Activated T-helper 1 cell treated with anti-CD3 and anti-CD28 coated beads, Interleukin-12 subunit alpha, Interleukin-12 subunit beta, Interleukin-2, Interleukin-4 antibody, amounts not matched to agents 30 ng/mL and 10 ng/mL and 1 ng/mL, durations not matched to agents 14 hours and 24 hours and 36 hours (primary cell): ENCODE measurements at regions of chr1 and their contacts with region 1.

Region 1: GRCh38 chr1:117642963-117643362 is 37.1 kb downstream of the TENT5C start:
- DNase-seq: no peak
- H3K4me3 Mint-ChIP-seq: no peak overlapping the region
- H3K27ac Mint-ChIP-seq: no peak overlapping the region
- H3K4me1 Mint-ChIP-seq: no peaks in the 10 kb centered on the region
- H3K27me3 Mint-ChIP-seq: peaks cover 30% of the 10 kb centered on the region

Region 2: GRCh38 chr1:117612517-117613248 is 30.3 kb before region 1 on chr1:
- intact Hi-C with region 1: loop called (anchors 2 kb)
- DNase-seq: no peak
- H3K4me3 Mint-ChIP-seq: no peak overlapping the region
- H3K27ac Mint-ChIP-seq: peak overlapping the region; percentile 25
- H3K4me1 Mint-ChIP-seq: peaks cover 86% of the 10 kb centered on the region
- H3K27me3 Mint-ChIP-seq: peaks cover 3% of the 10 kb centered on the region

Region 3: DNA sequence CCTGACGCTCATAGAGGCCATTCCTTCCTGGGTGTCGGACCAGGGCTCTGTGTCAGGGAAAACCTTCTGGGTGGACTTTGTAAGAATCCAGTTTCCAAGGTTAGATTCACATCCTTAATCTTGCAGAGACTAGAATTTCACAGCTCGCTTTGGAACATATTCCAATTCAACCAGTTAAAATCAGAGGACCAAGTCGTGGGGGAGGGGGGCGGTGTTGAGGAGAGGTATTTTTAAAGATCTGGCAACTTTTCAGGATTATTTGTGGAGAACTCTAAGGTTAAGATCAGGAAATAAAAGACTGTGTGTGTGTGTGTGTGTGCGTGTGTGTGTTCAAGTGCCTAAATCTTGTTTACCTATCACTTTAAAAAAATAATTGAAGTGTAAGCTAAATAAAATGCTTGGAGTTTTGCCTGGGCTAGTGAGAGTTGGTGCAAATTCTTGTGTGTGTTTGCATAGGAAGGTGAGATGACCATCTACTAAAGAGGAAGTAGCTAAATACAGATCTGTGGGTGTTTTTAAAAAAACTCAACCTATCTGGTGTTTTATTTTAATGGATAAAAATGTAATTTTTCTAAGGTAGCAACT is 15.3 kb before region 1 on chr1:
- intact Hi-C with region 1: loop called (anchors 2 kb)
- DNase-seq: no peak
- H3K4me3 Mint-ChIP-seq: no peak overlapping the region
- H3K27ac Mint-ChIP-seq: no peak overlapping the region
- H3K4me1 Mint-ChIP-seq: peaks cover 37% of the 10 kb centered on the region
- H3K27me3 Mint-ChIP-seq: peaks cover 5% of the 10 kb centered on the region

Region 4: GRCh38 chr1:117654493-117655219 is 11.7 kb after region 1 on chr1:
- intact Hi-C with region 1: loop called (anchors 1 kb)
- DNase-seq: no peak
- H3K4me3 Mint-ChIP-seq: peak overlapping the region; percentile 80
- H3K27ac Mint-ChIP-seq: peak overlapping the region; percentile 87
- H3K4me1 Mint-ChIP-seq: peaks cover 80% of the 10 kb centered on the region
- H3K27me3 Mint-ChIP-seq: peaks cover 13% of the 10 kb centered on the region